Calu3 (cell line): ENCODE measurements at regions of chr16 and their contacts with region 1.

Region 1: GRCh38 chr16:52446080-52446479 is 100.9 kb downstream of the TOX3 start:
- DNase-seq: peak; percentile 43
- H3K4me3 Mint-ChIP-seq: no peak overlapping the region
- H3K27ac Mint-ChIP-seq: no peak overlapping the region
- H3K4me1 Mint-ChIP-seq: peaks cover 45% of the 10 kb centered on the region
- H3K27me3 Mint-ChIP-seq: no peaks in the 10 kb centered on the region
- CTCF ChIP-seq: no peak

Region 2: DNA sequence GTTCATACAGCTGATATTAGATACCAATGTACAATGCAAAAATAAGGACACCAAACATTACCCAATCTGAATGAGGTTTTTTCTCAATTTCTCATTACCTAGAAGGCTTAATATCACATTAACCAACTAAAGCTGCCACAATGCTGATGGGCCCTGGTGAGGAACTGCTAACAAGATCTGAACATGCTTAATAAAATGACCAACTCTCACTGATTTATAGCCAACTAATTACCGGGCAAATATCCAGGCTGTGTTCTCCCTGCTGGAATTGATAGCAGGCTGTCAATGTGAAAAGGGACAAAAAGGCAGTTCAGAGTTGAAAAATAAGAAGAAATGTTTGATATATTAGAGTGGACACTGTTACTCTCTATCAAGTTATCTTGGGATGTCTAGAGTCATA is 23.8 kb before region 1 on chr16:
- CTCF ChIA-PET with region 1: no interaction called
- intact Hi-C with region 1: no loop called
- DNase-seq: no peak
- H3K4me3 Mint-ChIP-seq: no peak overlapping the region
- H3K27ac Mint-ChIP-seq: no peak overlapping the region
- H3K4me1 Mint-ChIP-seq: no peaks in the 10 kb centered on the region
- H3K27me3 Mint-ChIP-seq: no peaks in the 10 kb centered on the region
- CTCF ChIP-seq: no peak

Region 3: DNA sequence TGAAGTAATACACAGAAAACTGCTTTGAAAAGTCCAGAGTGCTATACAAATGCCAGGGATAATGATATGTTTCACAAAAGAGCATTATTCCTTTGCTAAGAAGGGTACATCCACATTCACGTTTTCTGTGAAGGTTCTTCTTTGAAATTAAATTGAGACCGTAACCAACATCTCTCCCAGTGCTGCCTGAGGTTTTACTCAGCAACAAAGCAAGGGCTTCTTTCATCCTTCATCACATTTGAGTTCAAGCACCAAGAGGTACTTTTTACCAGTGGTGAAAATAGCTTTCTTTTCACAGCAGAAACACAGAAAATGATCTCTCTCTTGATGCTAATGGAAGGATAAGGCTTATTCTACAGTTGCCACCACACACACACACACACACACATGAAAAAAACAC is 12.4 kb before region 1 on chr16:
- CTCF ChIA-PET with region 1: no interaction called
- intact Hi-C with region 1: no loop called
- DNase-seq: no peak
- H3K4me3 Mint-ChIP-seq: no peak overlapping the region
- H3K27ac Mint-ChIP-seq: no peak overlapping the region
- H3K4me1 Mint-ChIP-seq: peaks cover 2% of the 10 kb centered on the region
- H3K27me3 Mint-ChIP-seq: no peaks in the 10 kb centered on the region
- CTCF ChIP-seq: no peak

Region 4: DNA sequence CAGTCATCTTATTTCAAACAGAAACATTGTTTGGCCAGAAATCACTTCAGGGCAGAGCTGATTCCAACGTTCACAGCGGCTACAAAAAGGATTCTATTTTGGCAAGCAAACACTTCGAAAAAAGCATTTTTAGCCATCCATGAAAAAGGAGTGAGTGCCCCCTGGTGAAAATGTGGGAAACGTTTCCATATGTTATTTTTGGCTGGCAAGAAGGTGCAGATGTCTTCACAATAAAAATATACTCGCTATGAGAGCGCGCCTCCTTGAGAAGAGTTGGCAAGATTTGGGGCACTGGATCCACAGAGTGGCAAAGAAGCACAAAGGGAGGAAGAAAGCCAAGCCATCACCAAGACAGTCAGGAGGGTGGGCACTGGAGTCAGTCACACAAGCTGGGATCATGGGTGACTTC is 415.5 kb after region 1 on chr16:
- CTCF ChIA-PET with region 1: no interaction called
- intact Hi-C with region 1: loop called (anchors 5 kb)
- DNase-seq: peak; percentile 61
- H3K4me3 Mint-ChIP-seq: no peak overlapping the region
- H3K27ac Mint-ChIP-seq: no peak overlapping the region
- H3K4me1 Mint-ChIP-seq: peaks cover 36% of the 10 kb centered on the region
- H3K27me3 Mint-ChIP-seq: no peaks in the 10 kb centered on the region
- CTCF ChIP-seq: peak; percentile 48